GM23248 (cell line): ENCODE measurements at regions of chr2 and their contacts with region 1.

Region 1: DNA sequence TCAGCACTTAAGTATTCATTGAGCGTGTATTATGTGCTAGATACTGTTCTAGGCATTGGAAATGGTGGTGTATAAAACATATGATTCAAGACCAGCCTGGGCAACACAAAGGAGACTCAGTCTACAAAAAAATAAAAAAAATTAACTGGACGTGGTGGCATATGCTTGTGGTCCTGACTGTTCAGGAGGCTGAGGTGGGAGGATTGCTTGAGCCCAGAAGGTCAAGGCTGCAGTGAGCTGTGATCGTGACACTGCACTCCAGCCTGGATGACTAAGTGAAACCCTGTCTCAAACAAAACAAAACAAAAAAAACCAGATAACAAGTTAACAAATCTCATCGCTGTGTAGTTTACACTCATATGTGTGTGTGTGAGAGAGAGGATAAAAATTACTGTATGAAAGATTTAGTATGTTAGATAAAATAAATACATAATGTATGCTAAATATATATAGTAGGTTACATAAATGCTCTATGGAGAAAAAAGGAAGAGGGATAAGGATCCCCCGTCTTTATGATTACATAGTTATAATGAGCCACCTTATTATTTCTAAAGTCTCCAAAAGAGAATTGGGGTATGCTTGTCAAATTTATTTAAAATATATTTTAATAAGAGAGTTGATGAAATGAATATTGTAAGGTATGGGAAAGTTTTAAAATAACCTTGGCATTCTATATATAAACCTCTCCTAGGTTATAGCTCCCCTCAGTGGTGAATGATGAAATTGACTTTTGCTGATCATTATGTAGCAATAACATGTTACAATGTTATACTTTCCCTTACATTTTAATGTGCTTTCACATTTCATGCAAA is 69.2 kb downstream of the EHBP1 start:
- DNase-seq: peak; percentile 72
- H3K4me3 ChIP-seq: no peak overlapping the region
- H3K27ac ChIP-seq: peak overlapping the region; percentile 75
- H3K4me1 ChIP-seq: peaks cover 15% of the 10 kb centered on the region
- H3K27me3 ChIP-seq: no peaks in the 10 kb centered on the region

Region 2: DNA sequence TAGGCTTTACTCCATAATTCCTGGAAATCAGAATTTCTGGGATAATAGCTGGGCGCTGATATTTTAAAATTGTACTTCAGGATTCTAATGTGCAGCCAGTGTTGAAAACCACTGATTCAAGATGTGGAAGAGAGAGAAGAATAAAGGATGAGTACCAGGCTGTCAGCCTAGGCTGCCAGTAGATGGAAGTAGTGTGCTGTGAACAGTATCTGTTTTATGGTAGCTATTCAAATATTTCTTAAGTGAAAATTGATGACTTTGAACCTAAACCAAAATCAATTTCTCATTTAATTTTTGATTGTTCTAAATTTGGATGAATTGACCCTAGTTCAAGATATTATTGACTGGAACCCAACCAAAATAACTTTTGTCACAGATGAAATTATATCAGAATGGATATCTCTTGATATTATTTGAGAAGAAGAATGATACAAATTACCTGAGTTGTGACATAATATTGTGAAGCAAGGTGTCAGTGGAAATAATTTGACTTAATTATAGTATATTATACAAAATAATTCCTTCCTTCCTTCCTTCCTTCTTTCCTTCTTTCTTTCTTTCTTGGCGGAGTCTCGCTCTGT is 781.2 kb before region 1 on chr2:
- in situ Hi-C with region 1: loop called (anchors 10 kb)
- DNase-seq: peak; percentile 65
- H3K4me3 ChIP-seq: no peak overlapping the region
- H3K27ac ChIP-seq: no peak overlapping the region
- H3K4me1 ChIP-seq: no peaks in the 10 kb centered on the region
- H3K27me3 ChIP-seq: no peaks in the 10 kb centered on the region

Region 3: GRCh38 chr2:62456721-62457539 is 317.8 kb before region 1 on chr2:
- in situ Hi-C with region 1: loop called (anchors 10 kb)
- DNase-seq: peak; percentile 79
- H3K4me3 ChIP-seq: peak overlapping the region; percentile 80
- H3K27ac ChIP-seq: peak overlapping the region; percentile 20; the same call in 1 of the 2 replicates
- H3K4me1 ChIP-seq: peaks cover 14% of the 10 kb centered on the region
- H3K27me3 ChIP-seq: no peaks in the 10 kb centered on the region